ENCODE measurements at regions of chr3 and their contacts with region 1.

Region 1: GRCh38 chr3:58305882-58306711 is at the starts of genes HTD2 and RPP14:
- DNase-seq: peak; percentile 97 to 99 (median 98)
- H3K4me3 ChIP-seq: peak within 1 kb of the TSS; percentile 79 to 80
- H3K4me3 Mint-ChIP-seq: peak within 1 kb of the TSS; percentile 96 to 100 (median 98)
- H3K27ac ChIP-seq: peak within 1 kb of the TSS; percentile 93
- H3K27ac Mint-ChIP-seq: peak within 1 kb of the TSS; percentile 96 to 100 (median 100)
- H3K4me1 ChIP-seq: peaks cover 27% of the 10 kb centered on the region
- H3K4me1 Mint-ChIP-seq: peaks cover 23 to 37% (median 30%) of the 10 kb centered on the region in 4 donors
- H3K27me3 ChIP-seq: no peaks in the 10 kb centered on the region
- H3K27me3 Mint-ChIP-seq: peaks cover 3 to 8% of the 10 kb centered on the region in 2 donors
- total RNA-seq, gene HTD2: 9.2 to 10.5 TPM
- total RNA-seq, gene RPP14: 15.1 to 15.4 TPM

Region 2: DNA sequence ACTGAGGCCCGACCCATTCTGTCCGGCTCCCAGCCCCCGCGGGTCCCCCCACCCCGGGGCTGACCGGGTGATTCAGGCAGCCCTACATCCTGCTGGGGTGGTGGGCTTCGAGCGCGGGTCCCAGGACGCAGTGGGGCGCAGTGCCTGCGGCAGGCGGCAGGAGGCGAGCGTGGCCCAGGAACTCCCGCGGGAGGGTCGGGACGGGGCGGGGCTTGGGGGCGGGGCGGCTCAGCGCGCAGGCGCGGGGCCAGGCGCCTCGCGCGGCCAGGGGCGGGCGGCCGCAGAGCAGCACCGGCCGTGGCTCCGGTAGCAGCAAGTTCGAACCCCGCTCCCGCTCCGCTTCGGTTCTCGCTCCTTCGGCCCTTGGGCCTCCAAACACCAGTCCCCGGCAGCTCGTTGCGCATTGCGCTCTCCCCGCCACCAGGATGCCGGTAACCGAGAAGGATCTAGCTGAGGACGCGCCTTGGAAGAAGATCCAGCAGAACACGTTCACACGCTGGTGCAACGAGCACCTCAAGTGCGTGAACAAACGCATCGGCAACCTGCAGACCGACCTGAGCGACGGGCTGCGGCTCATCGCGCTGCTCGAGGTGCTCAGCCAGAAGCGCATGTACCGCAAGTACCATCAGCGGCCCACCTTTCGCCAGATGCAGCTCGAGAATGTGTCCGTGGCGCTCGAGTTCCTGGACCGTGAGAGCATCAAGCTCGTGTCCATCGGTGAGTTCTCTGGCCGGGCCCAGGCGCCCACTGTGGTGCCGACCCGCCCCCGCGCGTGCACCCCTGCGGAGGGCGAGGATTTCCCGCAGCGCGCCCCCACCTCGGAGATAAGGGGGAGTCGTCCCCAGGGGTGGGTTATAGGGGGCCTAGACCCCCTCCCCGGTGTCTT is 297.7 kb before region 1 on chr3 and contains the start of gene FLNB:
- CTCF ChIA-PET with region 1: interaction called, 3 read pairs
- POLR2A ChIA-PET with region 1: interaction called, 5 read pairs
- intact Hi-C with region 1: loop called (anchors 1 kb)
- DNase-seq: peak; percentile 72 to 78 (median 75)
- H3K4me3 ChIP-seq: peak within 1 kb of the TSS; percentile 65 to 100
- H3K4me3 Mint-ChIP-seq: peak within 1 kb of the TSS; percentile 83 to 94 (median 90)
- H3K27ac ChIP-seq: peak within 1 kb of the TSS; percentile 51
- H3K27ac Mint-ChIP-seq: peak within 1 kb of the TSS; percentile 47 to 92 (median 88)
- H3K4me1 ChIP-seq: peaks cover 31% of the 10 kb centered on the region
- H3K4me1 Mint-ChIP-seq: peaks cover 19 to 48% (median 30%) of the 10 kb centered on the region in 4 donors
- H3K27me3 ChIP-seq: no peaks in the 10 kb centered on the region
- H3K27me3 Mint-ChIP-seq: no peaks in the 10 kb centered on the region
- total RNA-seq, gene FLNB: 22.5 to 28.5 TPM

Region 3: DNA sequence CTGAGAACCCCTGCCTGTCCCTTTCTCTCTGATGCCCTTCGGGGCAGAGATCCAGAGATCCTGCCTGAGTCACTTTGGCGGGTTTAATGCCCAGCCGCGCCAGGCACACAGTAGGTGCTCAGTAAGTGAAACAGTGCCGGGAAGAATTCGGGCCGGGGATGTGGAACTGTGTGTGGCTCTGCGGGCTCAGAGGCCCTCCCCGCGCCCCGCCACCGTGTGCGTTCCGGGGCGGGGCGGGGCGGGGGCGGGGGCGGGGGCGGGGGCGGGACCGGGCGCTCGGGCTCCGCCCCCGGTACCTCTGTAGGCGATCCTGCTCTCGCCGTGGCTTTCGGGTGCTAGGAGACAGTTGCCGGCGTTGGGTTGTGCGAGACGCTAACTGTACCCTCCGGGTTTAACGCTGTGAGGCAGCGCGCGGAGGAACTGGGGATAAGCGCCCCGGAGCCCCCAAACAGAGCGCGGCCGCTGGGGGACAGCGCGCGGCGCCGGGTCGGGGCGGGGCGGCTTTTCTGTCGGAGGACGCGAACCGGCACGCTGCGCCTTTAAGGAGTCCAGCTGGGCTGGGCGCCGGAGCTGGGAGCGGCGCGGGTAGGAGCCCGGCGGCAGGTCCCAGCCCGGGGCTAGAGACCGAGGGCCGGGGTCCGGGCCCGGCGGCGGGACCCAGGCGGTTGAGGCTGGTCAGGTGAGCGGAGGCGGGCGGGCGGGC is 68.7 kb before region 1 on chr3 and contains the start of gene ABHD6:
- CTCF ChIA-PET with region 1: interaction called, 40 read pairs
- POLR2A ChIA-PET with region 1: interaction called, 23 read pairs
- intact Hi-C with region 1: loop called (anchors 1 kb)
- DNase-seq: peak; percentile 72 to 93 (median 88)
- H3K4me3 ChIP-seq: peak within 1 kb of the TSS; percentile 58
- H3K4me3 Mint-ChIP-seq: peak within 1 kb of the TSS; percentile 88 to 96 (median 92)
- H3K27ac ChIP-seq: peak within 1 kb of the TSS; percentile 62
- H3K27ac Mint-ChIP-seq: peak within 1 kb of the TSS; percentile 85 to 92 (median 91)
- H3K4me1 ChIP-seq: peaks cover 12% of the 10 kb centered on the region
- H3K4me1 Mint-ChIP-seq: peaks cover 7 to 21% (median 12%) of the 10 kb centered on the region in 4 donors
- H3K27me3 ChIP-seq: no peaks in the 10 kb centered on the region
- H3K27me3 Mint-ChIP-seq: peaks cover 3 to 4% of the 10 kb centered on the region in 2 donors
- total RNA-seq, gene ABHD6: 5.1 to 7.2 TPM

Region 4: DNA sequence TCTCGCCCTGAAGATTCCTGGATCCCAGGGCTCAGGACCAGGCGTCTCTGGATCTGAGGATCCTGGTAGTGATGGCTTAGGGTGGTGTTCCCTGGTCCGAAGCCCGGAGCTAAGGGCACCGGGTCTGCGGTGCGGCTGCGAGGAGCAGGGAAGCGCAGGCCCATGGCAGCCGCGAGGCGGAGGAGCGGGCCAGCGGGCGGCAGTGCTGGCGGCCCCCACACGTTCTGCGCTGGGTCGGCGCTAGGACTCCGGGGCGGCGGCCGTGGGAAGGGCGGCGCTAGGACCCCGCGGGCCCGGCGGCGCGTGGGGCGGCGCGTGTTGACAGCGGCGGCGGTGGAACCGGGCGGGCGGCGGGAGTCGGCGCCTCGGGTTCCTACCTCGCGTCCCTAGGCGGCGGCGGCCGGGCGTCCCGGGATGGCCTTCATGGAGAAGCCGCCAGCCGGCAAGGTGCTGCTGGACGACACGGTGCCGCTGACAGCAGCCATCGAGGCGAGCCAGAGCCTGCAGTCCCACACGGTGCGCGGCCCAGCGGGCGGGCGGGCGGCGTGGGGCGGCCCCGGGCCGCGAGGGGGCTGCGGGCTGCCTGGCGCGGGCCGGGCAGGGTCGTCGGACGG is 26.6 kb after region 1 on chr3 and contains the start of gene PXK:
- CTCF ChIA-PET with region 1: interaction called, 47 read pairs
- POLR2A ChIA-PET with region 1: interaction called, 33 read pairs
- intact Hi-C with region 1: loop called (anchors 1 kb)
- DNase-seq: peak; percentile 75 to 84 (median 81)
- H3K4me3 ChIP-seq: peak within 1 kb of the TSS; percentile 46 to 57
- H3K4me3 Mint-ChIP-seq: peak within 1 kb of the TSS; percentile 96 to 100 (median 100)
- H3K27ac ChIP-seq: peak within 1 kb of the TSS; percentile 56
- H3K27ac Mint-ChIP-seq: peak within 1 kb of the TSS; percentile 85 to 98 (median 95)
- H3K4me1 ChIP-seq: peaks cover 30% of the 10 kb centered on the region
- H3K4me1 Mint-ChIP-seq: peaks cover 23 to 48% (median 33%) of the 10 kb centered on the region in 4 donors
- H3K27me3 ChIP-seq: no peaks in the 10 kb centered on the region
- H3K27me3 Mint-ChIP-seq: no peaks in the 10 kb centered on the region
- total RNA-seq, gene PXK: 20.0 to 20.2 TPM

Region 5: GRCh38 chr3:58471025-58471887 is 165.2 kb after region 1 on chr3:
- CTCF ChIA-PET with region 1: interaction called, 16 read pairs
- POLR2A ChIA-PET with region 1: interaction called, 8 read pairs
- intact Hi-C with region 1: no loop called
- DNase-seq: peak; percentile 27 to 60 (median 37)
- H3K4me3 ChIP-seq: peak overlapping the region in 1 of 2 donors; percentile 9
- H3K4me3 Mint-ChIP-seq: peak overlapping the region in 7 of 8 donors; percentile 29 to 61 (median 49)
- H3K27ac ChIP-seq: peak overlapping the region; percentile 24
- H3K27ac Mint-ChIP-seq: peak overlapping the region; percentile 13 to 89 (median 79)
- H3K4me1 ChIP-seq: peaks cover 20% of the 10 kb centered on the region
- H3K4me1 Mint-ChIP-seq: peaks cover 18 to 41% (median 29%) of the 10 kb centered on the region in 4 donors
- H3K27me3 ChIP-seq: no peaks in the 10 kb centered on the region
- H3K27me3 Mint-ChIP-seq: no peaks in the 10 kb centered on the region

Region 6: DNA sequence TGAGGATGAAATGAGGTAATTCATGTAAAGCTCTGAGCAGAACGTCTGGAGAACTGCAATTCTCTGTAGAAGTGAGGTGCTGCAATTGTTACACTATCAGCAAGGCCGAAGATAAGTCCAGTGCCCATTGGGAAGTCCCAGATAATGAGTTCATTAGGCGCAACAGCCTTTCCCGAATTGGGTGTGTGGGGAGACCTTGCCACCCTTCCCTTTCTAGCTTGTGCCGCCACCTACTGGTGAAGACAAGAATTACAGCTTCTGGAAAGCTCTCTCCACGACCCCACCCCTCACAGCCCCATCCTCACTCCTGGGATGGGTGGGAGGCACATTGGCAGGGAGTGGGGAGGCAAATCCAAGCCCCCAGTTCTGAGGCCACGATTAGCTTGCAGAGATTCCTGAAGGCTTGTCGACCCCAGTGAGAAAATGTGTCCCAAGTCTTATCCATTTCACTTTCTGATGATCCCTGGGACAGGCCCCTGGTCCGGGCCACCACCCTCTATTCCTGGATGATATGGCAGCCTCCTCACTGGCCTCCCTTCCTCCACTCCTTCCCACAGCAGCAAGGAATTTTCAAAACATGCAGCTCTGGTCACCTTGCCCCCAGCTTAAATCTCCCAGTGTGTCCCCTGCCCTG is 324.1 kb after region 1 on chr3:
- CTCF ChIA-PET with region 1: interaction called, 16 read pairs
- POLR2A ChIA-PET with region 1: interaction called, 4 read pairs
- intact Hi-C with region 1: loop called (anchors 2 kb)
- DNase-seq: peak in 4 of 5 donors; percentile 29 to 46 (median 36)
- H3K4me3 ChIP-seq: no peak overlapping the region
- H3K4me3 Mint-ChIP-seq: no peak overlapping the region
- H3K27ac ChIP-seq: no peak overlapping the region
- H3K27ac Mint-ChIP-seq: no peak overlapping the region
- H3K4me1 ChIP-seq: no peaks in the 10 kb centered on the region
- H3K4me1 Mint-ChIP-seq: peaks cover 0 to 2% (median under 1%) of the 10 kb centered on the region in 4 donors
- H3K27me3 ChIP-seq: no peaks in the 10 kb centered on the region
- H3K27me3 Mint-ChIP-seq: peaks cover 0 to 8% of the 10 kb centered on the region in 2 donors